Naive thymus-derived CD4-positive, alpha-beta T cell (primary cell): ENCODE measurements at regions of chr15 and their contacts with region 1.

Region 1: GRCh38 chr15:86231864-86232721 is 152.4 kb downstream of the AGBL1 start:
- DNase-seq: peak in 6 of 9 donors; percentile 6 to 26 (median 20)
- ATAC-seq: peak; percentile 31
- H3K4me3 ChIP-seq: no peak overlapping the region
- H3K4me3 Mint-ChIP-seq: no peak overlapping the region
- H3K27ac ChIP-seq: no peak overlapping the region
- H3K27ac Mint-ChIP-seq: no peak overlapping the region
- H3K4me1 ChIP-seq: no peaks in the 10 kb centered on the region
- H3K4me1 Mint-ChIP-seq: peaks cover 0 to 7% (median 4%) of the 10 kb centered on the region in 7 donors
- H3K27me3 ChIP-seq: peaks cover 0 to 13% of the 10 kb centered on the region in 2 donors
- H3K27me3 Mint-ChIP-seq: peaks cover 18 to 55% (median 48%) of the 10 kb centered on the region in 5 donors

Region 2: GRCh38 chr15:85858586-85859375 is 373.3 kb before region 1 on chr15:
- CTCF ChIA-PET with region 1: no interaction called
- POLR2A ChIA-PET with region 1: no interaction called
- intact Hi-C with region 1: loop called (anchors 10 kb)
- DNase-seq: peak; percentile 48 to 77 (median 69)
- ATAC-seq: peak; percentile 91
- H3K4me3 ChIP-seq: no peak overlapping the region
- H3K4me3 Mint-ChIP-seq: peak overlapping the region in 8 of 10 donors; percentile 27 to 83 (median 45)
- H3K27ac ChIP-seq: no peak overlapping the region
- H3K27ac Mint-ChIP-seq: peak overlapping the region in 2 of 9 donors; percentile 52 to 65
- H3K4me1 ChIP-seq: peaks cover 0 to 7% of the 10 kb centered on the region in 2 donors
- H3K4me1 Mint-ChIP-seq: peaks cover 0 to 21% (median 4%) of the 10 kb centered on the region in 7 donors
- H3K27me3 ChIP-seq: no peaks in the 10 kb centered on the region
- H3K27me3 Mint-ChIP-seq: peaks cover 18 to 33% (median 27%) of the 10 kb centered on the region in 5 donors

Region 3: GRCh38 chr15:86139828-86140227 is 92.3 kb before region 1 on chr15:
- CTCF ChIA-PET with region 1: no interaction called
- POLR2A ChIA-PET with region 1: no interaction called
- intact Hi-C with region 1: no loop called
- DNase-seq: no peak
- ATAC-seq: no peak
- H3K4me3 ChIP-seq: no peak overlapping the region
- H3K4me3 Mint-ChIP-seq: no peak overlapping the region
- H3K27ac ChIP-seq: no peak overlapping the region
- H3K27ac Mint-ChIP-seq: no peak overlapping the region
- H3K4me1 ChIP-seq: no peaks in the 10 kb centered on the region
- H3K4me1 Mint-ChIP-seq: no peaks in the 10 kb centered on the region
- H3K27me3 ChIP-seq: no peaks in the 10 kb centered on the region
- H3K27me3 Mint-ChIP-seq: peaks cover 0 to 50% (median 17%) of the 10 kb centered on the region in 5 donors

Region 4: GRCh38 chr15:86743283-86743903 is 511.3 kb after region 1 on chr15:
- CTCF ChIA-PET with region 1: interaction called, 12 read pairs
- POLR2A ChIA-PET with region 1: no interaction called
- intact Hi-C with region 1: no loop called
- DNase-seq: peak; percentile 6 to 51 (median 25)
- ATAC-seq: no peak
- H3K4me3 ChIP-seq: no peak overlapping the region
- H3K4me3 Mint-ChIP-seq: no peak overlapping the region
- H3K27ac ChIP-seq: no peak overlapping the region
- H3K27ac Mint-ChIP-seq: no peak overlapping the region
- H3K4me1 ChIP-seq: no peaks in the 10 kb centered on the region
- H3K4me1 Mint-ChIP-seq: no peaks in the 10 kb centered on the region
- H3K27me3 ChIP-seq: no peaks in the 10 kb centered on the region
- H3K27me3 Mint-ChIP-seq: peaks cover 0 to 3% (median 0%) of the 10 kb centered on the region in 5 donors

Region 5: DNA sequence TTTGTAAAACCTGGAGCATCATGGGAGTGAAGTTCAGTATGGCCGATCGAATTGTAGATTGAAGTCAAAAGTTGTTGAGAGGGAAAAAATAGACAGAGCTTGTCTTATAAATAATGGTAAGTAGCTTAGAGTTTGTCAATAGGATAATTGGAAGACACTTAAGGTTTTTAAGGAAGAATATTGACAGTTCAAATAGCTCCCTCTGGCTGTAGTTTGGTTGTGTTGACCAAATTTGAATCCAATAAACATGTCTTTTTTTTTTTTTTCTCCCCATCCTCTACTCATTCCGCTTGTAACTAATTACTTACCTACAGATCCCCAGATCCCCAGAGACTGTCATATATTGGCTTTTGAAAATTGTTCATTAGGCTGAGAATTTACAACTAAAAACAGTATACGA is 524.6 kb after region 1 on chr15:
- CTCF ChIA-PET with region 1: no interaction called
- POLR2A ChIA-PET with region 1: no interaction called
- intact Hi-C with region 1: loop called in 1 of 2 experiments (anchors 5 kb)
- DNase-seq: no peak
- ATAC-seq: no peak
- H3K4me3 ChIP-seq: no peak overlapping the region
- H3K4me3 Mint-ChIP-seq: no peak overlapping the region
- H3K27ac ChIP-seq: no peak overlapping the region
- H3K27ac Mint-ChIP-seq: no peak overlapping the region
- H3K4me1 ChIP-seq: no peaks in the 10 kb centered on the region
- H3K4me1 Mint-ChIP-seq: peaks cover 0 to 3% (median 0%) of the 10 kb centered on the region in 7 donors
- H3K27me3 ChIP-seq: no peaks in the 10 kb centered on the region
- H3K27me3 Mint-ChIP-seq: peaks cover 0 to 28% (median 16%) of the 10 kb centered on the region in 5 donors

Region 6: DNA sequence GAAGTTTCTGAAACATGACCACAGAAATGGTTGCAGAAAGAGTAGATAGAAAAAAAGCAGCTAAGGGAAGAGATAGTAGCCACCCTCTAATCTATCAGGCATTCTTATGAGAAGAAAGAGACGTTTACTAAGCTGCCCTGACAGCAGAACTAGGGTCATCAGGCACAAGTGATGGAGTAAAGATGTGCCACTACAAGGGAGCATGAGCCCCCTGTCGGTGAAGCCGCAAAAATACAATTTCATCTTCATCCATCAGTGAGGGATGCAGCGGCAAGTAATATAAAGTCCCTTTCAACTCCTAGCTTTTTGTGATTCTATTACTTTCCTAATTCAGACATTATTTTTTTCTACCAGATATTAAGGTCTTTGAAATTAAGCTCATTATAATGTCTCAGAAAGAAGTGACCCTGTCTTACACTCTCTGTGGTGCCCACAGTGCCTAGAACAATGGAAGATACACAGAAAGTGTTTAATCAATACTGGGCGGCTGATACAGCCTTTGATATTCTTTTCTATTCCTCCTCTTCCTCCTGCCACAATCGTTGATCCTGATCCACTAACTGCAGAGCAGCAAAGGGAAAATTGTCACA is 1372.9 kb after region 1 on chr15:
- CTCF ChIA-PET with region 1: no interaction called
- POLR2A ChIA-PET with region 1: no interaction called
- intact Hi-C with region 1: loop called in 1 of 2 experiments (anchors 2 kb)
- DNase-seq: no peak
- ATAC-seq: no peak
- H3K4me3 ChIP-seq: no peak overlapping the region
- H3K4me3 Mint-ChIP-seq: no peak overlapping the region
- H3K27ac ChIP-seq: no peak overlapping the region
- H3K27ac Mint-ChIP-seq: no peak overlapping the region
- H3K4me1 ChIP-seq: no peaks in the 10 kb centered on the region
- H3K4me1 Mint-ChIP-seq: no peaks in the 10 kb centered on the region
- H3K27me3 ChIP-seq: no peaks in the 10 kb centered on the region
- H3K27me3 Mint-ChIP-seq: peaks cover 0 to 9% (median 5%) of the 10 kb centered on the region in 5 donors